ENCODE measurements at regions of chr9 and their contacts with region 1.

Region 1: DNA sequence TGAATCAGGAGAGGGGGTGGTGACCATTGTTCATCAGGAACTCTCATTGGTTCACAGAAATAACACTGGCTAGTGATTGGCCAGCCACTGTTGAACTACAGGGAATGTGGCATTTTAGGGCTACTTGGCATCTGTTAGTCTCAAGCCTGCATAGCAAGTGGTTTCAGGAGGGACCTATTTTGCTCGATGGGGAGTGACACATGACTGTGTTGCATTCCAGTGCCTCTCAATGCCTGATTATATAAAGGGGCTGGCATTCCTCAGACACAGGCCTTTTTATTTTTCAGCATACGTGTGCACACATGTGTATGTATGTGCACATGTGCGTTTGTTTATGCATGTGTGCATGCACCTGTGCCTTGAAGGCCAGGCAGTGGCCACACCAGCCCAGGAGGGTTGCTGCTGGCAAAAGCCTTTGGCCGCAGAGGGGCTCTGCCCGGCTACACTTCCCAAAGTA is 23.2 kb downstream of the FGD3 start:
- DNase-seq: no peak
- H3K4me3 ChIP-seq: peak overlapping the region; percentile 19 to 54
- H3K4me3 Mint-ChIP-seq: peak overlapping the region; percentile 75 to 99 (median 94)
- H3K27ac ChIP-seq: peak overlapping the region; percentile 84
- H3K27ac Mint-ChIP-seq: peak overlapping the region; percentile 88 to 100 (median 98)
- H3K4me1 ChIP-seq: peaks cover 97% of the 10 kb centered on the region
- H3K4me1 Mint-ChIP-seq: peaks cover 54 to 98% (median 76%) of the 10 kb centered on the region in 4 donors
- H3K27me3 ChIP-seq: no peaks in the 10 kb centered on the region
- H3K27me3 Mint-ChIP-seq: no peaks in the 10 kb centered on the region

Region 2: DNA sequence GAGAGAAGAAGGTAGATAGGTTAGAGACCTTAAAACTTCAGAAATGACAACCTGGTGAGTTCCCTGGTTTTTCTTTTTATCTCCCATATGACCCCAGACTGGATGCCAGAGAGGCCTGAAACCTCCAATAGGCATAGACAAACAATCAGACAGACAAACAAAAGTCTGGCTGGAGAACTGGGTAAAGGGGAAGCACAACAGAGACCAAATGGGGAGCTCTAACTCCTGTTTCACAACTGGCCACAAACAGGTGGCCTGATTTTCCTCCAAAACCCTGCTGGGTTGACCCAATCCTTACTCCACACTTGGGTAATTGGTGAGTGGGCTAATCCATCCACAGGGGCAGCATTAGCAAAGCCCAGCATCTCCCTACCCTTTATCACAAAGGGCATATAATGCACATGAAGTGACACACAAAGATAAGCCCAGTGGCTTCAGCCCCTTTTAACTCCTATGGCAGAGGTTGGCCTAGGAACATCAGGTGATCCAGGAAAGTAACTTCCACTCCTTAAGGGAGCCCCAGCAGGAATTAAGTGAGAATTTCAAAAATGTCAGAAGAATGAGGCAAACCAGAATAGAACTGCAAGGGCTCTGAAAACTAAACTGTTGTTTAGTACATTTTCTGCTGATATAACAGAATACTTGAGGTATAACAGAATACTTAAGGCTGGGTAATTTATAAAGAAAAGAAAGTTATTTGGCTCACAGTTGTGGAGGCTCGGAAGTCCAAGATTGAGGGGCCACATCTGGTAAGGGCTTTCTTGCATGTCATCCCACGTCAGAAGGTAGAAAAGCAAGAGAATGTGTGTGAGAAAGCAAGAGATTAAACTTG is 959.6 kb before region 1 on chr9:
- CTCF ChIA-PET with region 1: no interaction called
- POLR2A ChIA-PET with region 1: no interaction called
- intact Hi-C with region 1: no loop called
- DNase-seq: no peak
- H3K4me3 ChIP-seq: no peak overlapping the region
- H3K4me3 Mint-ChIP-seq: no peak overlapping the region
- H3K27ac ChIP-seq: no peak overlapping the region
- H3K27ac Mint-ChIP-seq: no peak overlapping the region
- H3K4me1 ChIP-seq: no peaks in the 10 kb centered on the region
- H3K4me1 Mint-ChIP-seq: no peaks in the 10 kb centered on the region
- H3K27me3 ChIP-seq: no peaks in the 10 kb centered on the region
- H3K27me3 Mint-ChIP-seq: peaks cover 1 to 4% of the 10 kb centered on the region in 2 donors

Region 3: GRCh38 chr9:92986176-92987085 is 15.9 kb after region 1 on chr9:
- CTCF ChIA-PET with region 1: interaction called, 32 read pairs
- POLR2A ChIA-PET with region 1: interaction called, 193 read pairs
- intact Hi-C with region 1: loop called (anchors 2 kb)
- DNase-seq: peak; percentile 50 to 72 (median 62)
- H3K4me3 ChIP-seq: no peak overlapping the region
- H3K4me3 Mint-ChIP-seq: peak overlapping the region in 7 of 8 donors; percentile 8 to 78 (median 43)
- H3K27ac ChIP-seq: peak overlapping the region; percentile 38
- H3K27ac Mint-ChIP-seq: peak overlapping the region; percentile 61 to 93 (median 87)
- H3K4me1 ChIP-seq: peaks cover 87% of the 10 kb centered on the region
- H3K4me1 Mint-ChIP-seq: peaks cover 62 to 95% (median 76%) of the 10 kb centered on the region in 4 donors
- H3K27me3 ChIP-seq: no peaks in the 10 kb centered on the region
- H3K27me3 Mint-ChIP-seq: no peaks in the 10 kb centered on the region

Measured in CD4-positive, alpha-beta memory T cell (primary cell).